Kidney (tissue), 22 donors: ENCODE measurements at regions of chr20 and their contacts with region 1.

Region 1: DNA sequence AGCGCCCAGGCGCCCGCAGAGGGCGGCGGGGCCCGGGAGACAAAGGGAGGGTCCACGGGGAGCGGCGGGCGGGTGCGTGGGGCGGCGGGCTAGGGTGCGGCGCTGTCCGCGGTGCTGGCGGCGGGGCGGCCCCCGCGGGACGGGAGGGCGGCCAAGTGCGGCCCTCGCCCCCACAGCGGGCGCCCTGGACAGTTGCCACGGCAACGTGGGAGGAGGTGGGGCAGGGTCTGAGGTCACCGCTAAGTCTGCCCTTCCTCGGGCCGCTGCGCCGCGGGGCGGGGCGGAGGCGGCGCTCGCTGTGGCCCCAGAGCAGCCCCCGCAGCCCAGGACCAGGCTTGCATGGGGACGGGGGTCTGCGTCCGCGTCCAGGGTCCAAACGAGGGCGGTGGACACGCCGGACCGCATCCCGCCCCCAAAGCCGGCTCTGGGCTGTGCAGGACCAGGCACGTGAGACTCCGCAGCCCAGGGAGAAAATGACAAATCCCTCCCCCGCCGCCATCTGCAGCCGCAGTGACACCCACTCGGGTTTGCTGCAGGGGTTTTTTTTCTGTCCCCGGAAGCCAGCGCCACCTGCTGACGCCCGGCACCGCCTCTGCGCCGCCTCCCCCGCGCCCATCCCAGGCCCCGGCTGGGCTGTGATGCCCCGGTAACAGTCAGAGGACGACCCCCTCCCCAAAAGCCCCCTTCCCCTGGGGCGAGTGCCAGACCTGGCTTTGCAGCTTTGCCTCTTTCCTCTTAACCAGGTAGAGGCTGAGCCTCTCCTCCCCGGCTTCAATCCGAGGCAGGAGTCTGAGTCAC is 36.8 kb downstream of the YTHDF1 start:
- DNase-seq: peak; percentile 49 to 78 (median 63)
- H3K4me3 ChIP-seq: no peak overlapping the region
- H3K27ac ChIP-seq: no peak overlapping the region
- H3K4me1 ChIP-seq: peaks cover 0 to 5% (median 0%) of the 10 kb centered on the region in 3 donors
- H3K27me3 ChIP-seq: peaks cover 22% of the 10 kb centered on the region
- CTCF ChIP-seq: peak; percentile 24

Region 2: GRCh38 chr20:63056236-63056948 is 122.7 kb before region 1 on chr20:
- intact Hi-C with region 1: loop called (anchors 10 kb)
- DNase-seq: peak; percentile 43 to 76 (median 63)
- H3K4me3 ChIP-seq: no peak overlapping the region
- H3K27ac ChIP-seq: no peak overlapping the region
- H3K4me1 ChIP-seq: no peaks in the 10 kb centered on the region
- H3K27me3 ChIP-seq: peaks cover 2% of the 10 kb centered on the region
- CTCF ChIP-seq: peak; percentile 62